Mammary epithelial cell (primary cell): ENCODE measurements at regions of chr3 and their contacts with region 1.

Region 1: DNA sequence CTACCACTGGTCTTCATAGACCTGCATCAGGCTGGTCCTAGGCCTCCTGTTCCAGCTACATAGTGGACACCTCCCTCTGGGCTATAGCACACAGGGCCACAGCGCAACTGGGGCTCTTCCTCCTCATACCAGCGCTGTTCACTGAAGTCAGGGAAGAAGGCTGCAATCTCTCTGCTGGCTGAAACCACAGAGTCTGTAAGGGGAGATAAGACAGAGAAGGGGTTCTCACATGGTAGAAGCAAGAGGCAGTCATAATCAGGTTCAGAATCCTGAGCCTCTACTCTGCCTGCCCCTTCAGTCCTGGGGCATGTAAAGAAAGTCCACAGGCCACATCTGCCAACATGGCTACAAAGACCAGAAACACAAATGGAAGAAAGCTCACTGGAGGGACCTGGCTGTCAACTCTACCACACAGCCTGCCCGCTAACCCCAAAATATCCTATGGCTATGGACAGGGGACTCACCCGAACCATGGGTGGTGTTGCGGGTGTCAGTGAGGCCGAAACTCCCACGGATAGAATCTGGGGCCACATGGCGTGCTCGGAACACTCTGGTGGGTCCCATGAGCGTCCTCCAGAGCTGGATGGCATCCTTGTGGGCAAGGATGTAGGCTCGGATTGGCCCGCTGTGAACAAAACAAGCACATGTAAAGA is 38.7 kb downstream of the SPINK8 start:
- DNase-seq: no peak
- H3K4me3 ChIP-seq: no peak overlapping the region
- H3K27ac ChIP-seq: no peak overlapping the region
- H3K4me1 ChIP-seq: no peaks in the 10 kb centered on the region
- H3K27me3 ChIP-seq: no peaks in the 10 kb centered on the region
- CTCF ChIP-seq: no peak

Region 2: DNA sequence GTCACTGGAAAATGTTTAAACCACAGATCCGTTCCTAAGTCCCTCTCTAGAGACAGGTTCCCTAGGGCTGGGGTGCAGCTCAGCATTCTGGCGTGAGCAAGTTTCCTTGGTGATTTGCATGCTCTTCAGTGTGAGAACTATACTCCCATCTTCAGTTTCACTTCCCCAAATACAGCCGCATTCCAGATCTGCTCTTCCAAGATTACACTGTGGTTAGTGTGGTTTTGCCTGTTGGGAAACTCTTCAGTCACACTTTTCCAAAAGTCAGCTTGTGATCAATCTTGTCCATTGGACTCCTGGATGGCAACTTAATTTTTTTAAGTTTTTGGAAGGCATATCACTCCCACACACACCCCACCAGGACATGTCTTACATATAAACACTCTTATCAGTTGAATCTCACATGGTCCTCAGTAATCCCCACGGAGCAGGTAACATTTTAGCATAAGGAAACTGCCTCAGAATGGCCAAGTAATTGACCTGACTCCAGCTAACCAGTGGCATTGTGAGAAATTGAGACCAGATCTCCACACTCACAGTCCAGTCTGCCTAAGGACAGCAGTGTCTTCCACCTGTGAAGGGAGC is 947.4 kb before region 1 on chr3:
- CTCF ChIA-PET with region 1: no interaction called
- dilution Hi-C with region 1: no loop called
- in situ Hi-C with region 1: no loop called
- intact Hi-C with region 1: no loop called
- DNase-seq: peak; percentile 47
- H3K4me3 ChIP-seq: no peak overlapping the region
- H3K27ac ChIP-seq: no peak overlapping the region
- H3K4me1 ChIP-seq: peaks cover 5% of the 10 kb centered on the region
- H3K27me3 ChIP-seq: no peaks in the 10 kb centered on the region
- CTCF ChIP-seq: no peak

Region 3: GRCh38 chr3:48016301-48016973 is 278.3 kb before region 1 on chr3 and contains the start of gene MAP4:
- CTCF ChIA-PET with region 1: no interaction called
- dilution Hi-C with region 1: no loop called
- in situ Hi-C with region 1: no loop called
- intact Hi-C with region 1: no loop called
- DNase-seq: no peak
- H3K4me3 ChIP-seq: no peak within 1 kb of the TSS
- H3K27ac ChIP-seq: no peak within 1 kb of the TSS
- H3K4me1 ChIP-seq: peaks cover 46% of the 10 kb centered on the region
- H3K27me3 ChIP-seq: no peaks in the 10 kb centered on the region
- CTCF ChIP-seq: no peak
- total RNA-seq, gene MAP4: 148 to 288 TPM

Region 4: DNA sequence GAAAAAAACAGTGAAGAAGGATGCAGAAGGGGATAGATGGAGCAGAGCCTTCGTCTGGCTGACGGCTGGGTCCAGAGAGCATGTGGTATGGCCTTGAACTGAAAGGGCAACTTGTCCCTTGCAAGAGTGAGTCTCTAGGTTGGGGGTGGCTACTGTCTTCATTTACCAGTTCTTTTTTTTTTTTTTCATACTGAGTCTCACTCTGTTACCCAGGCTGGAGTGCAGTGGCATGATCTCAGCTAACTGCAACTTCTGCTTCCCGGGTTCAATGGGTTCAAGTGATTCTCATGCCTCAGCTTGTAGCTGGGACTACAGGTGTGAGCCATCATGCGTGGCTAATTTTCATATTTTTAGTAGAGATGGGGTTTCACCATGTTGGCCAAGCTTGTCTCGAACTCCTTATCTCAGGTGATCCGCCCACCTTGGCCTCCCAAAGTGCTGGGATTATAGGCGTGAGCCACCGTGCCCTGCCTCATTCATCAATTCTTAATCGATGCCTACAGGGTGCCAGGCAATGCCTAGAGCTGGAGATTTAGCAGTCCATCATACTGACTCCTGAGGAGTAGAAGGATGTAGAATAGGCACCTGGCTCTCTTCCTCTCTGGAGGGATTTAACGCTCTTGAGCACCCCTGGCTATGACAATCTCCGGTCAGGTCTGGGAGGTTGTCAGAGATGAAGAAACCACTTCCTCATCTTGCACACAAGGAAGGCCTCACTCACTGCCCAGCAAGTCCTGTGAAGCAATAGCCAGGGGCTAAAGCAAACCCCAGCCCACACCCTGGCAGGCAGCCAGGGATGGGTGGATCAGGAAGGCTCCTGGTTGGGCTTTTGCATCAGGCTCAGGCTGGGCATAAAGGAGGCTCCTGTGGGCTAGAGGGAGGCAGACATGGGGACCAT is 71.9 kb before region 1 on chr3 and contains the start of gene CAMP:
- CTCF ChIA-PET with region 1: no interaction called
- dilution Hi-C with region 1: loop called (anchors 5 kb)
- in situ Hi-C with region 1: no loop called
- intact Hi-C with region 1: no loop called
- DNase-seq: peak; percentile 94
- H3K4me3 ChIP-seq: no peak within 1 kb of the TSS
- H3K27ac ChIP-seq: peak within 1 kb of the TSS; percentile 49
- H3K4me1 ChIP-seq: peaks cover 22% of the 10 kb centered on the region
- H3K27me3 ChIP-seq: no peaks in the 10 kb centered on the region
- CTCF ChIP-seq: no peak
- total RNA-seq, gene CAMP: 5.3 to 7.0 TPM

Region 5: GRCh38 chr3:48320996-48321395 is 26.3 kb after region 1 on chr3:
- CTCF ChIA-PET with region 1: no interaction called
- dilution Hi-C with region 1: loop called (anchors 5 kb)
- in situ Hi-C with region 1: no loop called
- intact Hi-C with region 1: no loop called
- DNase-seq: no peak
- H3K4me3 ChIP-seq: no peak overlapping the region
- H3K27ac ChIP-seq: no peak overlapping the region
- H3K4me1 ChIP-seq: no peaks in the 10 kb centered on the region
- H3K27me3 ChIP-seq: no peaks in the 10 kb centered on the region
- CTCF ChIP-seq: no peak